Panc1 (cell line): ENCODE measurements at regions of chr13 and their contacts with region 1.

Region 1: DNA sequence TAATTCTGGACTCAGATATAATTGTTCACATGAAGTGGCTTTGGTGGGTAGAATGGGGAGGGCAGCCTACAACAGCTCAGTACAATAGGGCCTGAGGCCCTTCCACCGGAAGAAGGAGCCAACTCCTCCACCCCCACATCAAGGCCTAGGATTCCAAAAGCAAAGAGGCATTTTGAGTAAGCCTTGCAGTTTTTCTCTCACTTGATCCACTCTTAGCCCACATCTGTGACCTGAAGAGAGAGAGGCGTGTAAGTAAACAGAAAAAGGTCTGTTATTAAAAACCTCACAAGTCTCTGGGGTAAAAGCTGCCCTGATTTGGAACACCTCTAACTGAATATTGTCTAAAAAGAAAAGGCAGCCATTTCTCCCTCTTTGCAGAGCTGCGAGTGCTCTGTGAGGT is 214.1 kb upstream of the KL start:
- DNase-seq: no peak
- ATAC-seq: no peak
- H3K4me3 ChIP-seq: no peak overlapping the region
- H3K27ac ChIP-seq: no peak overlapping the region
- H3K4me1 ChIP-seq: no peaks in the 10 kb centered on the region
- H3K27me3 ChIP-seq: no peaks in the 10 kb centered on the region
- CTCF ChIP-seq: no peak

Region 2: GRCh38 chr13:32784392-32784791 is 17.8 kb before region 1 on chr13:
- CTCF ChIA-PET with region 1: interaction called, 10 read pairs
- POLR2A ChIA-PET with region 1: no interaction called
- in situ Hi-C with region 1: no loop called
- intact Hi-C with region 1: no loop called
- DNase-seq: no peak
- ATAC-seq: no peak
- H3K4me3 ChIP-seq: no peak overlapping the region
- H3K27ac ChIP-seq: no peak overlapping the region
- H3K4me1 ChIP-seq: no peaks in the 10 kb centered on the region
- H3K27me3 ChIP-seq: no peaks in the 10 kb centered on the region
- CTCF ChIP-seq: no peak